H1 (cell line): ENCODE measurements at regions of chr2 and their contacts with region 1.

Region 1: GRCh38 chr2:102841107-102841840 is 79.4 kb downstream of the TMEM182 start:
- DNase-seq: peak; percentile 34 to 80
- H3K4me3 ChIP-seq: no peak overlapping the region
- H3K27ac ChIP-seq: no peak overlapping the region
- H3K4me1 ChIP-seq: peaks cover 0 to 3% (median 0%) of the 10 kb centered on the region in 4 experiments; a peak in 1 of 7 replicates
- H3K27me3 ChIP-seq: no peaks in the 10 kb centered on the region
- CTCF ChIP-seq: peak; percentile 64 to 83 (median 80)
- EP300 ChIP-seq: no peak
- POLR2A ChIP-seq: no peak
- RAD21 ChIP-seq: peak; percentile 63 to 75

Region 2: GRCh38 chr2:102826904-102827303 is 14.4 kb before region 1 on chr2:
- CTCF ChIA-PET with region 1: interaction called, 12 read pairs
- POLR2A ChIA-PET with region 1: no interaction called
- DNase-seq: no peak
- H3K4me3 ChIP-seq: no peak overlapping the region
- H3K27ac ChIP-seq: no peak overlapping the region
- H3K4me1 ChIP-seq: no peaks in the 10 kb centered on the region
- H3K27me3 ChIP-seq: no peaks in the 10 kb centered on the region
- CTCF ChIP-seq: no peak
- EP300 ChIP-seq: no peak
- POLR2A ChIP-seq: no peak
- RAD21 ChIP-seq: no peak

Region 3: GRCh38 chr2:102872388-102872787 is 31.1 kb after region 1 on chr2:
- CTCF ChIA-PET with region 1: interaction called, 44 read pairs
- POLR2A ChIA-PET with region 1: no interaction called
- DNase-seq: no peak
- H3K4me3 ChIP-seq: no peak overlapping the region
- H3K27ac ChIP-seq: no peak overlapping the region
- H3K4me1 ChIP-seq: no peaks in the 10 kb centered on the region
- H3K27me3 ChIP-seq: no peaks in the 10 kb centered on the region
- CTCF ChIP-seq: no peak; a peak in 1 of 4 replicates
- EP300 ChIP-seq: no peak
- POLR2A ChIP-seq: no peak
- RAD21 ChIP-seq: peak; percentile 41 to 43

Region 4: GRCh38 chr2:102880731-102881130 is 39.5 kb after region 1 on chr2:
- CTCF ChIA-PET with region 1: interaction called, 11 read pairs
- POLR2A ChIA-PET with region 1: no interaction called
- DNase-seq: no peak
- H3K4me3 ChIP-seq: no peak overlapping the region
- H3K27ac ChIP-seq: no peak overlapping the region
- H3K4me1 ChIP-seq: no peaks in the 10 kb centered on the region
- H3K27me3 ChIP-seq: no peaks in the 10 kb centered on the region
- CTCF ChIP-seq: no peak
- EP300 ChIP-seq: no peak
- POLR2A ChIP-seq: no peak
- RAD21 ChIP-seq: no peak

Region 5: DNA sequence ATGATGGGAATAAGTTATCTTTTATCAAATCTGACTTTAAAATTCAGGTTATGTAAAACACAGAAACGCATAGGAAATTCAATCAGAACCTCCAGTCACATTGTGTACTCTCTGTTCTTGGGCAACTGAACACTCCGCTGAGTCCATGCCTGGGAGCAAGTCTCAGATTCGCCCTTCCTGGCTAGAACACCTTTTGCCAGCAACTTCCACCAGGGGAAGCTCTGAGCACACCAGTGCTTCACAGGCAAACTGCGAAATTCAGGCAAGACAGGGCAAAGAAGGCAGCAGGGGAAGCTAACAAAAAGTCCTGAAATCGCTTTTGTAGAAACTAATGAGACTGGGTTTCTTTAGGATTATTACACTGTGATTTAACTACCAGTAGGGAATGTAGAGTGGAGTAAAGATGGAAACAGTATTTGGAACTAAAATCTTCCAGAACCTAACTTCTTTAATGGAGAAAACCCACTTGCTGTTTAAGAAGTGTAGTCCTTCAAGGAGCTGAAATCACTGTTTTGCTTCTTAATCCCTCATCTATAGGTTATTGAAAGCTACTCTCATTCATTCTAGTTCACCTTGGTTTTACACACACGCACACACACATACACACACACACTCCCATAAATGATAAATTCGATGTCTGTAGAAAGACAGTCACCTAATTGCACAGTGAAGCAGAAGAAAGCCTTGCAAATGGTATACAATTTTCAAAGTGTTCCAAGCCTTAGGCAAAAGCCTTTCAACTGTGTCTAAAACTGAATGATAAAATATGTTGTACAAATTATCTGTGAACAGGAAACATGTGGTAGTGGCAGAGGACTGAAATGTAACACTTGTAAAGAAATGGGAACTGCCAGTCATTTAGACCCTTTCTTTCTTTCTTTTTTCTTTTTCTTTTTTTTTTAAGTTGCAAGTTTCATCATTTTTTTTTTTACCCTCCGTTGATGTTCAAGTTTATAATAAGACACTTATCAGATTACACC is 135.0 kb after region 1 on chr2:
- CTCF ChIA-PET with region 1: interaction called, 16 read pairs
- POLR2A ChIA-PET with region 1: no interaction called
- DNase-seq: peak; percentile 36 to 54
- H3K4me3 ChIP-seq: no peak overlapping the region
- H3K27ac ChIP-seq: no peak overlapping the region
- H3K4me1 ChIP-seq: no peaks in the 10 kb centered on the region
- H3K27me3 ChIP-seq: no peaks in the 10 kb centered on the region
- CTCF ChIP-seq: peak; percentile 85 to 94 (median 86)
- EP300 ChIP-seq: no peak
- POLR2A ChIP-seq: no peak
- RAD21 ChIP-seq: peak; percentile 93 to 94

Region 6: DNA sequence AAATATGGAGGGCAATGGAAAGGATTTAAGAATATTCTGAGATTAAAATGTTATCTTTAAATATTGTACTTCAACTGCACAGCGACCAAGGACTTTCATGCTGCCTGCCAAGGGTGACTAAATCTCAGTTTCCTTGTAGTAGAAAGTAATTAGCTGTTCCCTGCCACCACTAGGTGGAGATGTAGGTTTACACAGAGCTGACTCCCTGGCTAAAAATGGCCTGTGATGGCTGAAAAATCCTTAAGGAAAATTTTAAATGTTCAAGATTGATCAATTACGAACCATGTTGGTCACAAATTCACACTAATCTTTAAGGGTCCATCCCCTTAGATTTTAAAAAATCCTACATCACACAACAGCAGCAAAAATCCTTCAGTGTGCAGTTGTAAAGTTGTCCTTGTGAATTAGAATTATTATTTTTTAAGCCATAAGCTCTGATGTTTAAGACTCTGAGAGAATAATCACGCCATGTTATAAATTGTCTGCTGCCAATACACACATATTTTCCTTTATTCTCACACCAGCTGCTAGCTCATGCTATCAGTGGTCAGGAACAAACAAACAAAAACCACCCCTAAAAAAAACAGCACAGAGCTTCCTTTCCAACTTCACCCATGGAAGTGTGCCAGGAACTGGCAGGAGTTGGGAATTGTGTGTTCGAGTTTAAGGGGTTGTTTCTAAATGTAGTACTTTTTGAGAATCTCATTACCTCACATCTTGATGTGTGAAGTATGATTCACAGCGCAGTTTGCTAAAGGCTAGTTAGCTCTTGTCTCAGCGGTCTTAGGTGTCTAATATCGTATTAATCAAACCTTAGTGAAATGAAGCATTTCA is 320.4 kb after region 1 on chr2:
- CTCF ChIA-PET with region 1: interaction called, 13 read pairs
- POLR2A ChIA-PET with region 1: no interaction called
- DNase-seq: no peak
- H3K4me3 ChIP-seq: no peak overlapping the region
- H3K27ac ChIP-seq: no peak overlapping the region
- H3K4me1 ChIP-seq: peaks cover 0 to 2% (median 1%) of the 10 kb centered on the region in 4 experiments; a peak in 2 of 7 replicates
- H3K27me3 ChIP-seq: no peaks in the 10 kb centered on the region
- CTCF ChIP-seq: peak in 2 of 3 experiments; percentile 74 to 79; a peak in 3 of 4 replicates
- EP300 ChIP-seq: no peak
- POLR2A ChIP-seq: no peak
- RAD21 ChIP-seq: peak; percentile 92 to 95